ENCODE measurements at regions of chr7 and their contacts with region 1.

Region 1: DNA sequence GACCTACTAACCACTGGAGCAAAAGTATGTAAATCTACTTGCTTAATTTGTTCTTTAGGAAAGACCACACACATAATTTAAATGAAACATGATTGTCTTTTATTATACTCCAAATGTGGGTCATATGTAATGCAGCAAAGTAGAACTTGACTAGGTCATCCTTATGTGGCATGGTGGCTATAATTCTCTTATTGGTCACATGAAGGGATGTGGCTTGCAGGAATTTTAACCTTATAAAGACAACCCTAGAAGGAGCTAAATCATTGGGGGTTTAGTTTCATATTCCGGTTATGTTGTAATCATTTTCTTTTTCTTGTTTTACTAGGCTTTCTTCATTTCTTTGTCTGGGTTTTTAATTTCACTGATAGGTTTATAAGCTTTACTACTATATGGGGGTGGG is 93.9 kb downstream of the SEPTIN7 start:
- DNase-seq: no peak
- ATAC-seq: no peak
- H3K4me3 ChIP-seq: no peak overlapping the region
- H3K4me3 Mint-ChIP-seq: no peak overlapping the region
- H3K27ac ChIP-seq: peak overlapping the region in 1 of 2 donors; percentile 36
- H3K27ac Mint-ChIP-seq: no peak overlapping the region
- H3K4me1 ChIP-seq: no peaks in the 10 kb centered on the region
- H3K4me1 Mint-ChIP-seq: peaks cover 2% of the 10 kb centered on the region
- H3K27me3 ChIP-seq: no peaks in the 10 kb centered on the region
- H3K27me3 Mint-ChIP-seq: no peaks in the 10 kb centered on the region
- CTCF ChIP-seq: no peak

Region 2: DNA sequence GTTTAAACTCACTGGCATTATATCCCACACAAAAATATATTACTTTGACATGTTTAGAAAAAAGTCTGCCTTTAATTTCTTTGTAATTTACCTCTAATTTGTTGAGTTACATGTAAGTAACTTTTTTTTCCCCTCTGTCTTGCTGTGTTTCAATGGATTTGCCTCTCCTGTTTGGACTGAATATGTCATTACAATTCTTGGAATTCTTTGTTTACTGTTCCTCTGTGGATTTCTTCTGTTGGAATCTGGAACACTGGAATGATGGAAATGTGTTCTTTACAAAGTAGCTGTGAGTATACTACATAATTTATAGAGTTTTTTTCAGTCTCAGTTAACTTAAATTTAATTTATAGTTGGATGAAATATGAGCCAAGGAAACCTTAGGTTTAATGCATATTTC is 63.5 kb before region 1 on chr7:
- CTCF ChIA-PET with region 1: no interaction called
- POLR2A ChIA-PET with region 1: no interaction called
- intact Hi-C with region 1: loop called (anchors 5 kb)
- DNase-seq: no peak
- ATAC-seq: no peak
- H3K4me3 ChIP-seq: no peak overlapping the region
- H3K4me3 Mint-ChIP-seq: no peak overlapping the region
- H3K27ac ChIP-seq: peak overlapping the region in 1 of 2 donors; percentile 40
- H3K27ac Mint-ChIP-seq: no peak overlapping the region
- H3K4me1 ChIP-seq: peaks cover 4 to 21% of the 10 kb centered on the region in 2 donors
- H3K4me1 Mint-ChIP-seq: peaks cover 59% of the 10 kb centered on the region
- H3K27me3 ChIP-seq: no peaks in the 10 kb centered on the region
- H3K27me3 Mint-ChIP-seq: no peaks in the 10 kb centered on the region
- CTCF ChIP-seq: no peak

Region 3: GRCh38 chr7:35860664-35861063 is 34.1 kb before region 1 on chr7:
- CTCF ChIA-PET with region 1: no interaction called
- POLR2A ChIA-PET with region 1: no interaction called
- intact Hi-C with region 1: no loop called
- DNase-seq: no peak
- ATAC-seq: no peak
- H3K4me3 ChIP-seq: no peak overlapping the region
- H3K4me3 Mint-ChIP-seq: no peak overlapping the region
- H3K27ac ChIP-seq: peak overlapping the region in 1 of 2 donors; percentile 37
- H3K27ac Mint-ChIP-seq: no peak overlapping the region
- H3K4me1 ChIP-seq: peaks cover 5 to 13% of the 10 kb centered on the region in 2 donors
- H3K4me1 Mint-ChIP-seq: peaks cover 43% of the 10 kb centered on the region
- H3K27me3 ChIP-seq: no peaks in the 10 kb centered on the region
- H3K27me3 Mint-ChIP-seq: no peaks in the 10 kb centered on the region
- CTCF ChIP-seq: no peak

Region 4: GRCh38 chr7:35967366-35968139 is 72.8 kb after region 1 on chr7:
- CTCF ChIA-PET with region 1: no interaction called
- POLR2A ChIA-PET with region 1: no interaction called
- intact Hi-C with region 1: no loop called
- DNase-seq: no peak
- ATAC-seq: no peak
- H3K4me3 ChIP-seq: no peak overlapping the region
- H3K4me3 Mint-ChIP-seq: no peak overlapping the region
- H3K27ac ChIP-seq: no peak overlapping the region
- H3K27ac Mint-ChIP-seq: no peak overlapping the region
- H3K4me1 ChIP-seq: peaks cover 3 to 7% of the 10 kb centered on the region in 2 donors
- H3K4me1 Mint-ChIP-seq: peaks cover 4% of the 10 kb centered on the region
- H3K27me3 ChIP-seq: peaks cover 0 to 10% (median 3%) of the 10 kb centered on the region in 4 experiments
- H3K27me3 Mint-ChIP-seq: peaks cover 21% of the 10 kb centered on the region
- CTCF ChIP-seq: no peak

Measured in B cell (primary cell).